ENCODE measurements at regions of chr18 and their contacts with region 1.

Region 1: DNA sequence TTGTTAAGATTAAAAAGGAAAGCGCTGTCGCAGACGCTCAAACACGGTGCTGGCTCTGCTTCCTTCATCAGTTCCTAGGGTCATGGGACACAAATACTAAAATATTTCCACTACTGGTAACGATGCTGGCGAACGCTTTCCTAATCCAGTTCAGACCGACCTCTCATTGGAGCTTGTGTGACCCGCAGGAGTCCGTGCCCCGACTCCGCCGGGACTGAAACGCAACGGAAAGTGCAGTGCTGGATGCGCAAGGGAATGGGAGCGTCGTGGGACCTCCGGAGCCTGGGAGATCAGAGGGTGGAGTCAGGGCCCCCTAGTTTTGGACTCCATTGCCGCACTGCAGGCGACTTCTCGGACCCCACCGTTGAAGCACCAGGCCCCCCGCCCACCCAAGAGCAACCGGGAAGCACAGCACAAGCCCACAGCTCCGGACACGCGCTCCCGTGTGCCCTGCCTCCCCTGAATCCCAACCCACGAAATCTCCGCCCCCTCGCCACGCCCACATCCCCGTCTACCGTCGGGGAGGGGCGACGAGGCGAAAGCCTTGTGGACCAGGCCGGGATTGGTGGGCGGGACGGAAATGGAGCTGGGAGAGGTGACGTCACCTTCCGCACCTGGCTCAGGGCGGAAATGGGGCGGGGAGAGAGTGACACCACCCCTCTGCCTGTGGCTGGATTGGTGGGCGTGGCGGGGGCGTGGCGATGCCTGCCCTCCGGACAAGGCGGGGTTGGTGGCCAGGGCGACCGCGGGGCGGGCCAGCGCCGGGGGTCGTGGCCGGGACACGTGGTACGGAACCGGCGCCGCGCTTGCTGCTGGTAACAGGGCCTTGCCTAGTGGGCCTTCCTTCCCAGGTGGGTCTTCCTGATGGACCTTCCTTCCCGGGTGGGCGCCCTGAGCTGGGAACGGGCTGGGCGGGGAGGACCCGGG is at the start of gene CNDP2:
- DNase-seq: peak; percentile 91 to 100 (median 98)
- ATAC-seq: peak; percentile 63
- H3K4me3 ChIP-seq: peak within 1 kb of the TSS; percentile 80
- H3K4me3 Mint-ChIP-seq: peak within 1 kb of the TSS; percentile 99
- H3K27ac ChIP-seq: peak within 1 kb of the TSS; percentile 78 to 86
- H3K27ac Mint-ChIP-seq: peak within 1 kb of the TSS; percentile 97
- H3K4me1 ChIP-seq: peaks cover 41% of the 10 kb centered on the region
- H3K4me1 Mint-ChIP-seq: peaks cover 61% of the 10 kb centered on the region
- H3K27me3 ChIP-seq: no peaks in the 10 kb centered on the region
- H3K27me3 Mint-ChIP-seq: no peaks in the 10 kb centered on the region
- CTCF ChIP-seq: no peak
- total RNA-seq, gene CNDP2: 75.5 to 75.7 TPM

Region 2: DNA sequence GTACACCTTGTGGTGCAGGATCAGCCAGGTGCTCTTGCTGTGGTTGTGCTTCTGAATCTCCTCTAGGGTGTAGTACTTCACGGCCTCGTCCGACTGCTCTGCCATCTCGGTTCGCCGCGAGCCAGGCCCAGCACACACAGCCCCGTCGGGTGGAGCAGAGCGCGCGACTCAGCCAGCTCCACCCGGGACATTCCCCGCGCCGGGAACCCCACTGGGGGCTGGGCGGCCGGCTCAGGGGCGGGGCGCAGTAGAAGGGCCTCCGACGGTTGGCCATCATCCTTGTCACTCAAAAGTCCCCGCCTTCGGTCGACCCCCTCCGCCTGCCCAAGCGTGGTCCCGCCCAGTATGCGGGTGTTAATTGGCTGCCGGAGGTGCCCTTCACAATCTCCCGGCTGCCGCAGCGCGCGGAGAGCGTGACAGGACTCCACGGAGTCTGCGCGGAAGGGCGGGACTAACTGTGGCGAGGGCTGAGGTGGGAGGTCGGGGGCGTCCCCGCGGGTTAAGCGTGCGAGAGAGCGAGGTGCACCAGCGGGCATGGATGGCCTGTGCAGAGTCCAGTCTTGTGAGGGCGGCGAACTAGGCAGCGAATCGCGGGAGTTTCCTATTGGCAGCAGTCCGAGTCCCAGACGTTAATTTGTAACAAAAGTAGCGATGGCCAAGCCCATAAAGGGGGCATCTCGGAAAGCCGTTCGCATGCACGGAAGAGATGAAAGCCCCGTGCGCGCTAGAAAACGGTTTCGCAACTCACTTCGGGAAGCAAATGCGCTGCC is 203.9 kb before region 1 on chr18 and contains the start of gene CYB5A:
- CTCF ChIA-PET with region 1: interaction called, 5 read pairs
- POLR2A ChIA-PET with region 1: interaction called, 3 read pairs
- intact Hi-C with region 1: loop called (anchors 2 kb)
- DNase-seq: peak; percentile 97 to 99 (median 98)
- ATAC-seq: peak; percentile 96
- H3K4me3 ChIP-seq: peak within 1 kb of the TSS; percentile 99
- H3K4me3 Mint-ChIP-seq: no peak within 1 kb of the TSS
- H3K27ac ChIP-seq: peak within 1 kb of the TSS in 1 of 2 donors; percentile 61
- H3K27ac Mint-ChIP-seq: peak within 1 kb of the TSS; percentile 35
- H3K4me1 ChIP-seq: peaks cover 19% of the 10 kb centered on the region
- H3K4me1 Mint-ChIP-seq: peaks cover 12% of the 10 kb centered on the region
- H3K27me3 ChIP-seq: no peaks in the 10 kb centered on the region
- H3K27me3 Mint-ChIP-seq: no peaks in the 10 kb centered on the region
- CTCF ChIP-seq: peak; percentile 20
- total RNA-seq, gene CYB5A: 3.7 to 4.1 TPM

Region 3: DNA sequence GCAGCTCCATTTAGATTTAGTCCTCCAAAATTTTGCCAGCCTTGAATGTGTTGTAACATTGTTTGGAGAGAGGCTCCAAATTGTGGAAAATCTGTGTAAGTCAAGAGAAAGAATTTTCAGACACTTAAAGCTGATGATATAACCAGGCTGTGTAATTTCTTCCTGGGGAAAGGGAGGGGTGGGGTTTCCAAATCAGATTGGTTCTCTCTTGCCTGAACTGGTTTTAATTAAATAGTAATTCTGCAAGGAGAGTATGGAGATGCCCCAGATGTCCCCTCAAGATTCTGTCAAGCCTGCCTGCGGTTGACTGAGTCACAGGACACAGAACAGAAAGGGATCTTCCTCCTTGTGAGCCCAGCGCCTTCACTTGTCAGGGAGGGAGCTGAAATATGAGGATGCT is 125.7 kb before region 1 on chr18:
- CTCF ChIA-PET with region 1: interaction called, 18 read pairs
- POLR2A ChIA-PET with region 1: interaction called, 69 read pairs
- intact Hi-C with region 1: loop called in 1 of 2 experiments (anchors 1 kb)
- DNase-seq: no peak
- ATAC-seq: no peak
- H3K4me3 ChIP-seq: no peak overlapping the region
- H3K4me3 Mint-ChIP-seq: no peak overlapping the region
- H3K27ac ChIP-seq: no peak overlapping the region
- H3K27ac Mint-ChIP-seq: no peak overlapping the region
- H3K4me1 ChIP-seq: peaks cover 31% of the 10 kb centered on the region
- H3K4me1 Mint-ChIP-seq: peaks cover 46% of the 10 kb centered on the region
- H3K27me3 ChIP-seq: no peaks in the 10 kb centered on the region
- H3K27me3 Mint-ChIP-seq: no peaks in the 10 kb centered on the region
- CTCF ChIP-seq: no peak

Region 4: DNA sequence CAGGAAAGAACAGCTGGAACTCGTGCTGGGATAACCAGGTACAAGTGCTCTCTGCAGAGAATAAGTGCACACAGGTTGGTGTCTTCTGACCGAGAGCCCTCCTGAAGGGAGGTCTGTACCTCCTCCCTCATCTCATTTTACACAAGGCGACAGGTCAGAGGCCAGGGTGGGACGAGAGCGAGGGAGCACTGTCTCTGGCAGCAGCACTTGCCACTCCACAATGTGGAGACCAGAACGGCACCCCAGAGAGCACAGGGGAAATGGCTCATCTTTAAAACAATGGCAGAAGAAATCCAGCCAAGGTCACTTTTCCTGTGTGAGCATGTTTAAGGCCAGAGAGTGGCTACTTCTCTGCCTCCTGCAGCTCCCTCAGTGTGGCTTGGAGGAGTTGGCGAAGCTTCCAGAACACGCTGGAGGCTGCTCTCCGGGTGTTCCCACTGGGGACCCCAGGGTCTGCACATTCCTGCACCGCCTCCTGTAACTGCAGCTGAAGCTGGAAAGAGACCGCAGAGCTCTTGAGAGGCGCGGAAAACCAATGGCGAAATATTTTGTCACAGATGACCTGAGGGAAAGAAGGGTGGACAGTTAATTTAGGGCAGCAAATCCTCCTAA is 59.6 kb before region 1 on chr18:
- CTCF ChIA-PET with region 1: no interaction called
- POLR2A ChIA-PET with region 1: no interaction called
- intact Hi-C with region 1: no loop called
- DNase-seq: no peak
- ATAC-seq: no peak
- H3K4me3 ChIP-seq: no peak overlapping the region
- H3K4me3 Mint-ChIP-seq: no peak overlapping the region
- H3K27ac ChIP-seq: no peak overlapping the region
- H3K27ac Mint-ChIP-seq: no peak overlapping the region
- H3K4me1 ChIP-seq: no peaks in the 10 kb centered on the region
- H3K4me1 Mint-ChIP-seq: no peaks in the 10 kb centered on the region
- H3K27me3 ChIP-seq: no peaks in the 10 kb centered on the region
- H3K27me3 Mint-ChIP-seq: no peaks in the 10 kb centered on the region
- CTCF ChIP-seq: no peak

Region 5: DNA sequence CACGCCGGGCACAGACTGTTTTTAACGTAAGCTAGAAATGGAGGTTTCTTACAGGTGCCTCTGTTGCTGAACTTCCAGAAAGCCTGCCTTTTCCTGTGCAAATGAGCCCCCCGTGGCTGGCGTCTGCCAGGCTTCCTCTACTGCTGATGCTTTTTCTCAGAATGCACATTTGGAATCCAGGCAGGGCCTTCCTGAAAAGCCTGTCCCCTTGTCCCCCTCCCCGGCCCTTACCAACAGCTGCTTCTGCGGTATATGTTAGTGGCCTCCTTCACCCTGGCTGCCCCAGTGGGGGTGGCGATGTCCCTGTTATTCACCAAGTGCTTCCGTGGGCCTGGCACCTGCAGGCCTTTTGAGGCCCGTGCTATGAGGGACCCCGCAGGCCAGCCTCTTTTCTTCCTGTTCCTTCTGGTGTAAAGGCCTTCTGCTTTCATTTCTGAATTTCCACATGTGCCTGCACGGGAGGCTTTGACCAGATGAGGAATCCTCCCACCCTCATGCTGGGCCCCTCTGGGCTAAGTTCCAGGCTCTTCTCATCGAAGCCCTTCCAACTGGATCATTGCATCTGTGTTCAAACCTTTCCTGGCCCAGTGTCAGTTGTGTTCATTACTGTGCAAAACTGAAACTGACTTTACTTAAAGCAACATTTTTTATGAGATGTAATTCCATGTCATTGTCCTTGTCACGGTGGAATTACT is 10.7 kb after region 1 on chr18:
- CTCF ChIA-PET with region 1: interaction called, 10 read pairs
- POLR2A ChIA-PET with region 1: interaction called, 4 read pairs
- intact Hi-C with region 1: no loop called
- DNase-seq: no peak
- ATAC-seq: no peak
- H3K4me3 ChIP-seq: no peak overlapping the region
- H3K4me3 Mint-ChIP-seq: no peak overlapping the region
- H3K27ac ChIP-seq: no peak overlapping the region
- H3K27ac Mint-ChIP-seq: no peak overlapping the region
- H3K4me1 ChIP-seq: no peaks in the 10 kb centered on the region
- H3K4me1 Mint-ChIP-seq: peaks cover 4% of the 10 kb centered on the region
- H3K27me3 ChIP-seq: no peaks in the 10 kb centered on the region
- H3K27me3 Mint-ChIP-seq: no peaks in the 10 kb centered on the region
- CTCF ChIP-seq: no peak

Region 6: GRCh38 chr18:75209129-75209950 is 713.5 kb after region 1 on chr18 and contains the start of gene PTGR3:
- CTCF ChIA-PET with region 1: no interaction called
- POLR2A ChIA-PET with region 1: interaction called, 3 read pairs
- intact Hi-C with region 1: loop called in 1 of 2 experiments (anchors 5 kb)
- DNase-seq: peak; percentile 51 to 92 (median 70)
- ATAC-seq: peak; percentile 48
- H3K4me3 ChIP-seq: peak within 1 kb of the TSS; percentile 98
- H3K4me3 Mint-ChIP-seq: peak within 1 kb of the TSS; percentile 98
- H3K27ac ChIP-seq: peak within 1 kb of the TSS; percentile 78 to 81
- H3K27ac Mint-ChIP-seq: peak within 1 kb of the TSS; percentile 99
- H3K4me1 ChIP-seq: peaks cover 43% of the 10 kb centered on the region
- H3K4me1 Mint-ChIP-seq: peaks cover 66% of the 10 kb centered on the region
- H3K27me3 ChIP-seq: no peaks in the 10 kb centered on the region
- H3K27me3 Mint-ChIP-seq: no peaks in the 10 kb centered on the region
- CTCF ChIP-seq: no peak
- total RNA-seq, gene PTGR3: 14.1 to 14.3 TPM